ENCODE measurements at regions of chr4 and their contacts with region 1.

Region 1: DNA sequence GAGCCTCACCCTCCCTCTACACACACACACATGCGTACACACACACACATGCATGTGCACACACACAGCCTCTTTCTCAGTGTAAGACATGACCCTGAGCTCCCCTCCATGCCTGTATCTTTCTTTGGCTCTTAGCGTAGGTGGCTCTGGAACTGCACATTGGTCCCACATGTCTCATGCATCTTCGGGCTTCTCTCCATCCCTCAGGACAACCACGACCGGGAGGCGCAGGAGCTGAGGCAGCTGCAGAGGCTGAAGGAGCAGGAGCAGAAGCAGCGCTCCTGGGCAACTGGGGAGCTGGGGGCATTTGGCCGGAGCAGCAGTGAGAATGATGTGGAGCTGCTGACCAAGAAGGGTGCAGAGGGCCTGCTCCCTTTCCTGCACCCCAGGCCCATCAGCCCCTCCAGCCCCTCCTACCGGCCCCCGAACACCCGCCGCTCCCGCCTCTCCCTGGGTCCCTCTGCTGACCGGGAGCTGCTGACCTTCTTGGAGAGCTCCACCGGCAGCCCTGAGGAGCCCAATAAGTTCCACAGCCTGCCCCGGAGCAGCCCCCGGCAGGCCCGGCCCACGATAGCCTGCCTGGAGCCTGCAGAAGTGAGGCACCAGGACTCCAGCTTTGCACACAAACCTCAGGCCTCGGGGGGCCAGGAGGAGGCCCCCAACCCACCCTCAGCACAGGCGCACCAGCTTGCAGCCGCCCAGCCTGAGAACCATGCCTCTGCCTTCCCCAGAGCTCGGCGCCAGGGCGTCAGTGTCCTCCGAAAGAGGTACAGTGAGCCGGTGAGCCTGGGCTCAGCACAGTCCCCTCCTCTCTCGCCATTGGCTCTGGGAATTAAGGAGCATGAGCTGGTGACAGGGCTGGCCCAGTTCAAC is 38.6 kb downstream of the FHDC1 start:
- DNase-seq: no peak

Region 2: GRCh38 chr4:152747444-152747843 is 227.3 kb before region 1 on chr4:
- intact Hi-C with region 1: loop called in 1 of 2 experiments (anchors 5 kb)
- DNase-seq: no peak

Region 3: DNA sequence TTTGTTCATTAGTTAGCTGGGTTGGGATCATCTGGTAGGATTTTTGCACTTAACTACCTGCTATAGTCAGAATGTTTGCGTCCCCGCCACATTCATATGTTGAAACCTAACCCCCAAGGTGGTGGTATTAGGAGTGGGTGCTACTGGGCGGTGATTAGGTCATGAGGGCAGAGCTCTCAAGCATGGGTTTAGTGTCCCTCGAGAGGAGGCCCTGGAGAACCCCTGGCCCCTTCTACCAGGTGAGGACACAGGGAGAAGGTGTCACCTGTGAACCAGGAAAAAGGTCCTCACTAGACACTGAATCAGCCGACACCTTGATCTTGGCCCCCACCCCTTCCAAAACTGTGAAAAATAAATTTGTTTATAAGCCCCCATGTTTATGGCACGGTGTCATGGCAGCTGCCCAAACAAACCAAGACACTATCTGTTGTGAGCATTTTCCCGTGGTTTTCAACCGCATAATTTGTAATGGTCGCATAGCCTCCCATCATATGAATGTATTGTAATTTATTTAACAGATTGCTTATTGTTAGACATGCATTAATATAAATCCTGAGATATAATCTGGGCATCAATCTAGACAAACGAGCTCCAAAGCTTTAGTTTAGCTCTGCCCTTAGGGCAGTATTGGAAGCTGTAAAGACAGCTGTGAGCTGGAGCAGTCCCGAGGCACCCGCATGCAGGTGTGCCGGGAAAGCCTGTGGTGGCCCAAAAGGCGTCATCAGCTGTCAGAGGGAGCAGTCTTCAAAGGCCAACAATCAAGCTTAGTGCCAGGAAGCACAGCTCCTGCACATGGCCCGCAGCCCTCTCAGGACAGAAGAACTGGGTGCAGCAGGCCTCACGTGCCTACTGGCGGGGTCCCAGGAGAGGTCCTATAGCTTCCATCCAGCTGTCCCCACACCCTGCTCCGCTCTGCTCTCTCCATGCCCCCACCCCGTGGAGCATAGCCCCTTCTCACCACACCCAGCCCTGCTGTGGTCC is 137.0 kb after region 1 on chr4:
- intact Hi-C with region 1: no loop called
- DNase-seq: peak; percentile 41